ENCODE measurements at regions of chr11 and their contacts with region 1.

Region 1: DNA sequence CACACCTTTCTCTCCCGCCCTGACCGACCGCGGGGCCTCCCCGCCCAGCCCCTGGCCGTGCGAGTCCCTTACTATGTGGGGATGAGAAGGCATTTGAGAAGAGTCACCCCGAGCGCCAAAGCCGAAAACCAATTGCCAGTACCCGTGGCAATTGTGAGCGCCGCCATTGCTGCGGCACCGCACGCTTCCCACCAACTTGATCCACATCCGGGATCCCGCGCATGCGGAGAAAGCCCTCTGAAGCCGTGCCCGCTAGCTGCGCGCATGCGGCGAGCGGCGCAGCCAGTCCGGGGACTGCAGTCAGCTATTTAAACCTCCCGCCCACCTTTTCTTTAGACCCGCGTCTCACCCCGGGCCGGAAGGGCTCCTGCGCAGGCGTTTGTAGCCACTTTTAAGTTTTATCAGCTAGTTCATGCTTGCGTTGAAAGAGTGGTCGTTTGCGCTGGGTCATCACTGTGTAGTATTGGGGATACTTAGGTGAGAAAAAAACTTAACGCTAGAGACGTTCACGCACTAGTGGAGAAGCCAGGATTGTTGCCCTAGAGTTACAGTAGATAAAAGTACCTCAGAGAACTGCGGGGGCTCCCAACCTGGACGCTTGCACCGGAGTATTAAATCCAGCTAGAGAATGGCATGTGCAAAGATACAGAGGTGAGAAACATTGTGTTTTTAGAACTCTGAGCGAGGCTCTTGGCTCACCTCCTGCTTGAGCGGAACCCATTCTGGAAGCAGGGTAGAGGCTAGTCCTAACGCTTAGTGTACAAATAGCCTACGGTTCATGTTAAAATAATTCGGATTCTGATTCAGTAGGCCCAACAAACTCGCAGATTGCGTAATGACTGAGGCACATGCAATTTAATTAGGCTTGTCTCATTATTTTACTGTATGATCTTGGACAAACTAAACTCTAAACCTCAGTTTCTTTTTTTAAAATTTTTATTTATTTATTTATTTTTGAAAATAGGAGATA is at the start of gene ALG8:
- DNase-seq: peak; percentile 90
- H3K4me3 ChIP-seq: peak within 1 kb of the TSS; percentile 67 to 89 (median 88)
- H3K27ac ChIP-seq: peak within 1 kb of the TSS; percentile 83
- H3K4me1 ChIP-seq: peaks cover 16% of the 10 kb centered on the region
- H3K27me3 ChIP-seq: no peaks in the 10 kb centered on the region
- CTCF ChIP-seq: no peak
- total RNA-seq, gene ALG8: 30.3 to 32.7 TPM

Region 2: DNA sequence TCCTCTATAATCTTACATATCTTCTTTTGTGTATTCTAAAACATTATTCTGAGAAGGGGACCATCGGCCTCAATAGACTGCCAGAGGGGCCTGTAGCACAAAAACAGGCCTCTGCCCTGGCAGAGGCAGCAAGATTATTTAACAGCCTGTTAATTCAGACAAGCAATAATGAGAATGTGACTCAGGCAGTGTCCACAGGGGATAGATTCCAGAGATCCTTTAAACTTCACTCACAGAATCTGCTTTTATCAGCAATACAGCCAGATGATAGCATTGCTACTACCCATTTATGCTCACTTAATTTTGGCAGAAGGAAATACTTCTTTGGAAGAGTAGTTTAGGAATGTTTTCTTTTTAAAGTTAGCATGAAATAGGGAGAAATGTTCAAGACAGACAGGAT is 273.9 kb before region 1 on chr11:
- CTCF ChIA-PET with region 1: no interaction called
- dilution Hi-C with region 1: no loop called
- in situ Hi-C with region 1: no loop called
- intact Hi-C with region 1: no loop called
- DNase-seq: no peak
- H3K4me3 ChIP-seq: no peak overlapping the region
- H3K27ac ChIP-seq: no peak overlapping the region
- H3K4me1 ChIP-seq: no peaks in the 10 kb centered on the region
- H3K27me3 ChIP-seq: no peaks in the 10 kb centered on the region
- CTCF ChIP-seq: no peak

Region 3: GRCh38 chr11:78079232-78080083 is 60.2 kb before region 1 on chr11 and contains the start of gene NDUFC2:
- CTCF ChIA-PET with region 1: no interaction called
- dilution Hi-C with region 1: no loop called
- in situ Hi-C with region 1: no loop called
- intact Hi-C with region 1: loop called (anchors 2 kb)
- DNase-seq: peak; percentile 75
- H3K4me3 ChIP-seq: peak within 1 kb of the TSS; percentile 56 to 95 (median 88)
- H3K27ac ChIP-seq: peak within 1 kb of the TSS; percentile 86
- H3K4me1 ChIP-seq: peaks cover 19% of the 10 kb centered on the region
- H3K27me3 ChIP-seq: no peaks in the 10 kb centered on the region
- CTCF ChIP-seq: no peak
- total RNA-seq, gene NDUFC2: 108 to 209 TPM

Region 4: DNA sequence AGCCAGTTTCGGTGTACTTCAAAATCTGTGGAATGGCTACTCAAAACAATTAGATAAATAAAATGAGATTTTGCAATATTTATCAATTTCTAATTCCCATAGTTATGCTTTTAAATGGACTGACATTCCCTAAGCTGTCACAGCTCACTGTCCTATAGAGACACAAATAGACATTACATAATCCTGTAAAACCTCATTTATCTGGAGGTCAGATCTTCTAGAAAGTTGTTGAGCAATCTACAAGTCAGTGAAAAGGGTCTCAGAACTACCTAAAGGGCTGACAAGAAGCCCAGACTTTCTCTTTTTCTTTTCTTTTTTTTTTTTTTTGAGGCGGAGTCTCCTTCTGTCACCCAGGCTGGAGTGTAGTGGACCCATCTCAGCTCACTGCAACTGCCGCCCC is 12.3 kb before region 1 on chr11:
- CTCF ChIA-PET with region 1: no interaction called
- dilution Hi-C with region 1: no loop called
- in situ Hi-C with region 1: no loop called
- intact Hi-C with region 1: no loop called
- DNase-seq: no peak
- H3K4me3 ChIP-seq: no peak overlapping the region
- H3K27ac ChIP-seq: no peak overlapping the region
- H3K4me1 ChIP-seq: no peaks in the 10 kb centered on the region
- H3K27me3 ChIP-seq: no peaks in the 10 kb centered on the region
- CTCF ChIP-seq: no peak

Region 5: GRCh38 chr11:78179459-78180069 is 39.9 kb after region 1 on chr11:
- CTCF ChIA-PET with region 1: no interaction called
- dilution Hi-C with region 1: loop called (anchors 5 kb)
- in situ Hi-C with region 1: no loop called
- intact Hi-C with region 1: no loop called
- DNase-seq: no peak
- H3K4me3 ChIP-seq: no peak overlapping the region
- H3K27ac ChIP-seq: no peak overlapping the region
- H3K4me1 ChIP-seq: no peaks in the 10 kb centered on the region
- H3K27me3 ChIP-seq: no peaks in the 10 kb centered on the region
- CTCF ChIP-seq: no peak

Region 6: GRCh38 chr11:78188286-78189173 is 48.8 kb after region 1 on chr11 and contains the starts of genes KCTD21 and USP35:
- CTCF ChIA-PET with region 1: no interaction called
- dilution Hi-C with region 1: no loop called
- in situ Hi-C with region 1: no loop called
- intact Hi-C with region 1: loop called (anchors 2 kb)
- DNase-seq: peak; percentile 96
- H3K4me3 ChIP-seq: peak within 1 kb of the TSS; percentile 53 to 99 (median 71)
- H3K27ac ChIP-seq: peak within 1 kb of the TSS; percentile 52
- H3K4me1 ChIP-seq: peaks cover 41% of the 10 kb centered on the region
- H3K27me3 ChIP-seq: no peaks in the 10 kb centered on the region
- CTCF ChIP-seq: no peak
- total RNA-seq, gene KCTD21: 8.7 to 9.7 TPM
- total RNA-seq, gene USP35: 10.7 to 13.3 TPM

Region 7: GRCh38 chr11:78251083-78251775 is 111.5 kb after region 1 on chr11:
- CTCF ChIA-PET with region 1: no interaction called
- dilution Hi-C with region 1: no loop called
- in situ Hi-C with region 1: no loop called
- intact Hi-C with region 1: no loop called
- DNase-seq: no peak
- H3K4me3 ChIP-seq: no peak overlapping the region
- H3K27ac ChIP-seq: no peak overlapping the region
- H3K4me1 ChIP-seq: no peaks in the 10 kb centered on the region
- H3K27me3 ChIP-seq: no peaks in the 10 kb centered on the region
- CTCF ChIP-seq: no peak